Mammary epithelial cell (primary cell): ENCODE measurements at regions of chr5 and their contacts with region 1.

Region 1: GRCh38 chr5:179697993-179698934 is 503 bp upstream of the CANX start:
- DNase-seq: peak; percentile 100
- H3K4me3 ChIP-seq: peak overlapping the region; percentile 76 to 98 (median 88)
- H3K27ac ChIP-seq: peak overlapping the region; percentile 95
- H3K4me1 ChIP-seq: peaks cover 3% of the 10 kb centered on the region
- H3K27me3 ChIP-seq: no peaks in the 10 kb centered on the region
- CTCF ChIP-seq: no peak

Region 2: GRCh38 chr5:179509239-179509638 is 189.0 kb before region 1 on chr5:
- CTCF ChIA-PET with region 1: no interaction called
- dilution Hi-C with region 1: no loop called
- in situ Hi-C with region 1: no loop called
- intact Hi-C with region 1: no loop called
- DNase-seq: no peak
- H3K4me3 ChIP-seq: no peak overlapping the region
- H3K27ac ChIP-seq: no peak overlapping the region
- H3K4me1 ChIP-seq: no peaks in the 10 kb centered on the region
- H3K27me3 ChIP-seq: no peaks in the 10 kb centered on the region
- CTCF ChIP-seq: no peak

Region 3: GRCh38 chr5:179559284-179560252 is 138.7 kb before region 1 on chr5:
- CTCF ChIA-PET with region 1: no interaction called
- dilution Hi-C with region 1: no loop called
- in situ Hi-C with region 1: no loop called
- intact Hi-C with region 1: loop called (anchors 1 kb)
- DNase-seq: peak; percentile 98
- H3K4me3 ChIP-seq: peak overlapping the region; percentile 70 to 95 (median 83)
- H3K27ac ChIP-seq: peak overlapping the region; percentile 76
- H3K4me1 ChIP-seq: peaks cover 13% of the 10 kb centered on the region
- H3K27me3 ChIP-seq: no peaks in the 10 kb centered on the region
- CTCF ChIP-seq: no peak

Region 4: GRCh38 chr5:179613460-179614071 is 84.7 kb before region 1 on chr5:
- CTCF ChIA-PET with region 1: interaction called, 20 read pairs
- dilution Hi-C with region 1: no loop called
- in situ Hi-C with region 1: no loop called
- intact Hi-C with region 1: no loop called
- DNase-seq: no peak
- H3K4me3 ChIP-seq: no peak overlapping the region
- H3K27ac ChIP-seq: no peak overlapping the region
- H3K4me1 ChIP-seq: no peaks in the 10 kb centered on the region
- H3K27me3 ChIP-seq: no peaks in the 10 kb centered on the region
- CTCF ChIP-seq: no peak

Region 5: DNA sequence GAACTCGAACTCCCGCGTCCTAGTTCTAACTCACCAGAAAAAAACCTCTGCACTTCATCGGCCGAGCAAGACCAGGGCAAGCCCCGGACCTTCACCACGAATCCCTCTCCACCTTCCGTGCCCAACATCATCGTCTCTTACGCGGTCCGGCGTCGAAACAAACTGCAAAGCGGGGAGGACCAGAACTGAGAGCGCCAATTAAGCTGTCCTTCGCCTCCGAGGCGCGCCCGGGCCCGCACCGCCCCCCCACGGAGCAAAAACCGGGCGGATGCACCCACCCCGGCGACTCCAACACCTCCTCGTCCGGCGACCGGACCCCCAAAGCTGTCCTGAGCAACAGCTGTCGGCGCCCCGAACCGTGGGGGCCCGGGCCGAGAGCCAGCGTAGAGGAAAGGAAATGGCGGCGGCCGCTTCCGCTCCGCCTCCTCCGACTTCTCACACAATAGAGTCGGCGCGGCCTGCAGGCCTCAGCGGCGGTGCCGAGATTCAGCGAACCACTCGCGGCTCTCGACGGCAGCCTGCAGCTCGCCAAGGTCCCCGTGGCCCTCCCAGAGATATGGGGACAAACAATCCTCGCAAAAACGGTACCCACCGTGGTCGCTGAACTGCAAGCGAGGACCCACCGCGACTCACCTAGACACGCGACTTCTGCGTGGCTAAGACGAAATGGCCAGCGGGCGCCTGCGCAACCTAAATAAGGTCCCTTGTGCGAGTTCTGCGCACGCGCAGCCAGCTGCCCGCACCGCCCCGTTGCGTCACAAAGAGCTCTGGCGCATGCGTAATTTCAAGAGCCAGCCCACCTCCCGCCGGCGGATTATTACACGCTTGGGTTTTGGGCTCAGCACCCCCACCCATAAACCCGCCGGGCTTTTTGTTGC is 75.0 kb before region 1 on chr5 and contains the start of gene HNRNPH1:
- CTCF ChIA-PET with region 1: no interaction called
- dilution Hi-C with region 1: no loop called
- in situ Hi-C with region 1: no loop called
- intact Hi-C with region 1: loop called (anchors 2 kb)
- DNase-seq: peak; percentile 97
- H3K4me3 ChIP-seq: peak within 1 kb of the TSS; percentile 81 to 95 (median 89)
- H3K27ac ChIP-seq: peak within 1 kb of the TSS; percentile 90
- H3K4me1 ChIP-seq: peaks cover 34% of the 10 kb centered on the region
- H3K27me3 ChIP-seq: no peaks in the 10 kb centered on the region
- CTCF ChIP-seq: no peak
- total RNA-seq, gene HNRNPH1: 276 to 481 TPM

Region 6: DNA sequence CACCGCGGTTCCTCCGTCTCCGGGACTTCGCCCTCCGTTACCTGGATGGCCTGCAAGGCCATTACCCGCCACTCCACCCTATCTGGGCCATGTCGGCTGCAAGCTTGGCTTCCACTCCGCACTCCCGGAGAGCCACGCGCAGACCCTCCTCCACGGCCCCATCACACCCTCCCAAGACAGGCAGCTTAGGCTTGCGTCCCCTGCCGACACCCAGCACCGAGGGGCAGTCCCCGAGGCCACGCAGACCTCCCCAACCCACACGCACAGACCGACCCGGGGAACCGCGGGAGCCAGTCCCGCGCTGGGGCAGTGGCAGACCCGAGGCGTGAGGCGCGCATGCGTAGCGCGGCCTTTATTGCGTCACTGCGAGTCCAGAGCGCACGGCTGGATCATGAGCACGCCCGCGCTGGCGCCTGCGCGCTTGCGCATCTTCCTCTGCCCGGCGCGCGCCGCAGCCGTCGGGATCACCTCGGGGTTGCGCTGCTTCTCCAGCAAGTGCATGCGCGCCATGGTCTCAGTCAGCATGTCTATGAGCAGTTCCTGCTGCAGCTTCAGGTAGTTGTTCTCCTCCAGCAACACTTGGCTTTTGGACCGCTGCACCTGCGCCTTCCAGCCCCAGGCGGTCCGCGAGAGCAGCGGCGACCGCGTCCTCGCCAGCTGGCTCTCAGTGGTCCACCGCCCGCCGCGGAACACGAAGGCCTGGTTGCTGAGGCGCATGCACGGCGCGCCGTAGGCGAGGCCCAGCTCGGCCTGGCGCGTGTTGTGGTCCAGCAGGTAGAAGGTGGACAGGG is 19.8 kb before region 1 on chr5:
- CTCF ChIA-PET with region 1: no interaction called
- dilution Hi-C with region 1: no loop called
- in situ Hi-C with region 1: no loop called
- intact Hi-C with region 1: loop called (anchors 1 kb)
- DNase-seq: peak; percentile 90
- H3K4me3 ChIP-seq: peak overlapping the region; percentile 54 to 98 (median 90)
- H3K27ac ChIP-seq: peak overlapping the region; percentile 42
- H3K4me1 ChIP-seq: peaks cover 12% of the 10 kb centered on the region
- H3K27me3 ChIP-seq: no peaks in the 10 kb centered on the region
- CTCF ChIP-seq: peak in 1 of 2 donors; percentile 13

Region 7: GRCh38 chr5:179732417-179732917 is 34.2 kb after region 1 on chr5 and contains the start of gene MAML1:
- CTCF ChIA-PET with region 1: no interaction called
- dilution Hi-C with region 1: no loop called
- in situ Hi-C with region 1: no loop called
- intact Hi-C with region 1: loop called (anchors 1 kb)
- DNase-seq: peak; percentile 100
- H3K4me3 ChIP-seq: peak within 1 kb of the TSS; percentile 58 to 82 (median 60)
- H3K27ac ChIP-seq: peak within 1 kb of the TSS; percentile 67
- H3K4me1 ChIP-seq: peaks cover 8% of the 10 kb centered on the region
- H3K27me3 ChIP-seq: no peaks in the 10 kb centered on the region
- CTCF ChIP-seq: no peak
- total RNA-seq, gene MAML1: 10.5 to 17.7 TPM